Posterior vena cava (tissue), 2 donors: ENCODE measurements at regions of chr1 and their contacts with region 1.

Region 1: DNA sequence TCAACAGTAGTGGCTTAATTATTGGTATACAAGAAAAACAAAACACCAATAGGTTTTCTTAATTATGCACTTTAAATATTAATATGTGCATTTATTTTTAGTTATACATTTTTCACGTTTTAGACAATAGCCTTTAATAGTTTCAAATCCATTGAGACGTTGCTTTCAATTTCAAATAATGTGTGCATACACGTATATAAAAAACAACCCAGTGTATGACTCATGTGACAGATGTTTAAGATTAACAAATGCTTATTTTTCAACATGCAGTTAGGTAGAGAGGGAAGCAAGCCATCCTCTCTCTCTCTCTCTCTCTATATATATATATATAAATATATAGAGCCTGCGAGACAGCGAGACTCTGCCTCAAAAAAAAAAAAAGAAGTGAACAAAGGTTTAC is 24.3 kb downstream of the EYA3 start:
- DNase-seq: no peak

Region 2: DNA sequence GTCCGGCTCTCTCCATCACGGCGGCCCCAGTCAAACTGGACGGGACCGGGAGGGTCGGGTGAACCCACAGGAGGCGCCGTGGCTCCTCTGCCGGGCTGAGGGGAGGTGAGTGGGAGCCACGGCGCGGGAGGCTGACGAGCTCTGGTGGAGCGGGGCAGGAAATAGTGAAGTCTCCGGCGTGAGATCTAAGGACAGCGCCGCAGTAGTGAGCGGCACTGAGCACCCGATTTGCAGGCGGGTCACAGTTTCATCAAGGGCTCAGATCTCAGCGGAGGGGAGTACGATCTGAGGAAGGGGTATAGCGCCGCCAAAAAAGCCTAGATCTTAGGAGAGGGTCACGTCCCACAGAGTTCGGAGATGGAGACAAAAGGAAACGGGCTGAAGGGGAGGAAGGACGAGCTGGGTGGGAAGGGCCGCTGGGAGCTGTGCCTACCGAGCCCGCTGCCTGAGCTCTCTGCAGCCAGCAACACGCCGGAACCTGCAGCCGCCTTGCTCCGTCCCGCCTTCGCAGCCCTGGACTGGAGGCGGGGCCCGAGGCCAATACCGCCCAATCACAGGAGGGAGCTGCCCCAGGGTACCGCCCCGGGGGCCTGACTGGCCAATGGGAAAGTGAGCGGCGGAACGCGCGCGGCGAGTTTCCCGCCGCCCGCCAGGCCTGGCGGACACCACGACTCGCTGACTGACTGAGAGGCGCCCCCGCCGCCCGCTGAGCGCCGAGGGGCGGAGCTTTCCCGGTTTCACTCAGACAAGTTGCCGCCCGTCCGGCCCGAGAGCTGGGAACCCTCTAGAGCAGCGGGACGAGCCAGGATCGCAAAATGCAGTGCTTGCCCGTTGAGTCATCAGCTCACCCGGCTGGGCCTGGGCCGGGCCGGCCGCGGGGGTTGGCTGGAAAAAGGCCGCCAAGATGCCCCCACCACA is 1199.2 kb before region 1 on chr1:
- intact Hi-C with region 1: loop called in 1 of 2 experiments (anchors 10 kb)
- DNase-seq: peak; percentile 99

Region 3: DNA sequence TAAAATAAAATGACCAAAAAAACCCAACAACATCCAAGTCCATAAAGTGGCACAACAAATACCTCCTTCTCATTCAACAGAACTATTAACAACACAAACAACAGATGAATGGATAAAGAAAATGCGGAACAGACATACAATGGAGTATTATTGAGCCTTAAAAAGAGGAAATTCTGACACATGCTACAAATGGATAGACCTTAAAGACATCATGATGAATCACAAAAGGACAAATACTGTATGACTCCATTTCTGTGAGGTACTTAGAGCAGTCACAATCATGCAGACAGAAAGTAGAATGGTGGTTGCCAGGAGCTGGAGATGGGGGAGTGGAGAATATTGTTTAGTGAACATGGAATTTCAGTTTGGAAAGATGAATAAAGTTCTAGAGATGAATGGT is 18.3 kb before region 1 on chr1:
- intact Hi-C with region 1: no loop called
- DNase-seq: no peak

Region 4: GRCh38 chr1:28266920-28267322 is 202.9 kb after region 1 on chr1:
- intact Hi-C with region 1: no loop called
- DNase-seq: no peak

Region 5: DNA sequence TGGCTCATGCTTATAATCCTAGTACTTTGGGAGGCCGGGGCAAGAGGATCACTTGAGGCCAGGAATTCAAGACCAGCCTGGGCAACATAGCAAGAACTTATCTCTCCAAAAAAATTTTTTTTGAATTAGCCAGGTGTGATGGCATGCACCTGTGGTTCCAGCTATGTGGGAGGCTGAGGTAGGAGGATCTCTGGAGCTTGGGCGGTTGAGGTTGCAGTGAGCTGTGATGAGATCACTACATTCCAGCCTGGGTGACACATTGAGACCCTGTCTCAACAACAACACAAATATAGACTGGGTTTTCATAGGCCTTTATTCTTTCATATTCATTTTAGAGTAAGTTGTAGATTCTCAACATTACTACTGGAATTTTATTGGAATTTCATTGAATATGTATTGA is 277.5 kb after region 1 on chr1:
- intact Hi-C with region 1: no loop called
- DNase-seq: peak; percentile 23